Activated CD4-positive, alpha-beta T cell treated with anti-CD3 and anti-CD28 coated beads, Interleukin-2, amount 10 ng/mL, durations not matched to agents 7 days and 5 days (primary cell): ENCODE measurements at regions of chr17 and their contacts with region 1.

Region 1: DNA sequence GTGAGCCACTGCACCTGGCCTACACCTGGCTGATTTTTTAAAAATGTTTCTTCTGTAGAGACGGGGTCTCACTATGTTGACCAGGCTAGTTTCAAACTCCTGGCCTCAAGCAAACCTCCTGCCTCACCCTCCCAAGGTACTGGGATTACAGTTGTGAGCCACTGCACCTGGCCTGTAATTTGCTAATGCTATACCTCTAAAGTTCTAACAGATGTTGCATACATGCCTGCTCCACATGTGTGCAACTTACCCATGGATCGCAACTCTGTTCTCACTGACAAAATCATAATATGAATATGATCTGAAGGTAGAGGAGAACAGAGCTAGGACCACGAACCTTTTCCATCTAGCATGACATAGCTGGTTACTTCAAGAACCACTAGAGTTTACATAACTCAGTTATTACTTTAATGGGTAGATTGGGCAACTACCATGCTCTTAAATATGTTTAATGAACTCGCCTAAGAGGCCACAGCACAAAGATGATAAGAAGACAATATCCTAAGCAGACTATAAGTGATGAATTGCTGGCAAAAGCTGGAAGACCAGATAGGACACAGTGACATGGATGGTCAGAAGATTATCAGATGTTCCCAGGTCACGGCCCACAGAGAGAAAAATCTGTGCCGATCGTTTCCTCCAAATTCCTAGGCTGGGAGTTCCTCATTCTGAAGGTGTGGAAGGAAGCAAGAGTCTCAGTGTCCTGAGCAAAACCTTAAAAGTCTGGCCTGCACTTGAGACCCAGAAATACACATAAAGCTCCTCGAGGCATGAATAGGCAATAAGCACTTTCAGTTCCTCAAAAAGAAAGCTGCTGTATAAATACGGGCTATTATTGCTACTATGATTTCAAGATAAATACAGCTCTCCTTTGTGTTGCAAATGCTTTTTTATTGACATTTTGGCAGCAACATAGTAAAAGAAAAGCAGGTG is 53.6 kb upstream of the ICAM2 start:
- DNase-seq: no peak
- H3K4me3 Mint-ChIP-seq: no peak overlapping the region
- H3K27ac Mint-ChIP-seq: no peak overlapping the region
- H3K4me1 Mint-ChIP-seq: peaks cover 26% of the 10 kb centered on the region
- H3K27me3 Mint-ChIP-seq: no peaks in the 10 kb centered on the region

Region 2: DNA sequence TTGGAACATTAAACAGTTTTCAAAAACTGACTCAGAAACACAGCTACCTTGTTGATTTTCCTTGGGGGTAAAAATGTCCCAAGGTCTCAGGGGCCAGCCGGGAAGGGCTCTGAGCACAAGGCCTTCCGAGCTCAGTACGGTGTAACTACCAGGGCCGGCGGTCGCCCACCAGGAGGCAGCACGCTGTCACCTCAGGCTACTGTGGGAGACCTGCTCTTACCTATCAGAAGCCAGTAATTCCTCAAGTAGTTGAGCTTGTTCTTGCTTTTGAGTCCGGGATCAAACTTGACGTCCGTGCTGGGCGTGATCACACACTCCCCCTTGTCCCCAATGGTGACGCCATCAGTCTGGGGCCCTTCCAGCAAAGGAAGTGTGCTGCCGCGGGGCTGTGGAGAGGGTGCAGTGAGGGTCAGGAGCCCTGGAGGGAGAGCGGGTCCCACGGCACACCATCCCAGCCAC is 10.2 kb before region 1 on chr17:
- CTCF ChIA-PET with region 1: interaction called, 10 read pairs
- POLR2A ChIA-PET with region 1: no interaction called
- DNase-seq: peak; percentile 62
- H3K4me3 Mint-ChIP-seq: peak overlapping the region; percentile 8
- H3K27ac Mint-ChIP-seq: peak overlapping the region; percentile 78
- H3K4me1 Mint-ChIP-seq: peaks cover 81% of the 10 kb centered on the region
- H3K27me3 Mint-ChIP-seq: no peaks in the 10 kb centered on the region